GM12878 (cell line): ENCODE measurements at regions of chr19 and their contacts with region 1.

Region 1: DNA sequence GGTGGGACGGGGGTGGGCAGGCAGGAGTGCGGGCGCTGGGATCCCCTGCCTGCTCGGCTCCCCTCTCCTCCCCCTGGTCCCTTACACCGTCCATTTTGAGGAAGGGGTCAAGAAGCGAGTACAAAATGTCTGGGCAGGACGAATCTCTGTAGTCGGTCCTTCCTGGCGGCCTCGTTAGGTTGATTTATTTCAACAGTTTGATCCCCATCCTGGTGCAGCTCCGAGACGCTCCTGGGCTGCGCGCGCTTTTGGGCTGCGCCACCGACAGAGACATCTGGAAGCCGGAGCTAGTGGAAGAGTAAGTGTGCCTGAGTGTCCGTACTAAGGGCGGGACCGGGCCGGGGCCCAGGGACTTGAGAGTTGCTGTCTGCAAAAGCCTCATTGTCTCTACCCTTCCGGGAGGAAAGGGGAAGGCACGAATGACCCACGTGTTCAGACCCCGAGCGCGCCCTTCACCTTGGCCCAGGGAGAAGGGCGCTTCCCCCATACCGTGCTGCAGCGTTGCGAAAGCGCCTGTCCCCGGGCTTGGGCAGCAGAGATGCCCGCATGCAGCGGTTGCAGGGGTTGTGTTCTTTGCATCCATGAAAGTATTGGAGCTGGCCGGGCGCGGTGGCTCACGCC is 1.8 kb downstream of the ZNF114 start:
- DNase-seq: no peak
- ATAC-seq: peak; percentile 69
- H3K4me3 ChIP-seq: peak overlapping the region; percentile 90
- H3K27ac ChIP-seq: peak overlapping the region; percentile 83
- H3K4me1 ChIP-seq: no peaks in the 10 kb centered on the region
- H3K27me3 ChIP-seq: no peaks in the 10 kb centered on the region; a peak in 1 of 4 replicates
- CTCF ChIP-seq: no peak
- EP300 ChIP-seq: no peak
- POLR2A ChIP-seq: peak; percentile 77
- RAD21 ChIP-seq: no peak

Region 2: DNA sequence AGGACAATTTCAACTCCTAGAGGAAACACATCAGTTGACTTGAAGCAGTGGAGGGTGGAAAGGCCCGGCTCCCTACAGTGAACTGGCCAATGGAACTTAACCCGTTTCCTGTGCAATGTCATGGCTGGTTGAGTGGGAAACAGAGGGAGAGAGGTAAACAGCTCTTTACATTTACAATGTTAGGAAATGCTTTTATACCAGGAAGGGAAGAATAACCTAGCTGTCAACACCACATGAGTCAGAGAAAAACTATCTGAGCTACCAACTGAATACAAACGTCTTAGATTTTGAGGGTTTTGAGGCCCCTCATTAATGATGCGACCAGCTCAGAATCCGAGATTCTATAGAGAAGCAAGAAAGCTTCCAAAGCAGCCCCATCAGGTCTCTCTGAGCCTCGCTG is 52.6 kb before region 1 on chr19:
- CTCF ChIA-PET with region 1: no interaction called
- POLR2A ChIA-PET with region 1: no interaction called
- RAD21 ChIA-PET with region 1: no interaction called
- SMC1A ChIA-PET with region 1: no interaction called
- in situ Hi-C with region 1: no loop called
- intact Hi-C with region 1: no loop called
- DNase-seq: no peak
- ATAC-seq: no peak
- H3K4me3 ChIP-seq: no peak overlapping the region
- H3K27ac ChIP-seq: no peak overlapping the region
- H3K4me1 ChIP-seq: no peaks in the 10 kb centered on the region
- H3K27me3 ChIP-seq: no peaks in the 10 kb centered on the region
- CTCF ChIP-seq: no peak
- EP300 ChIP-seq: no peak
- POLR2A ChIP-seq: no peak
- RAD21 ChIP-seq: no peak

Region 3: DNA sequence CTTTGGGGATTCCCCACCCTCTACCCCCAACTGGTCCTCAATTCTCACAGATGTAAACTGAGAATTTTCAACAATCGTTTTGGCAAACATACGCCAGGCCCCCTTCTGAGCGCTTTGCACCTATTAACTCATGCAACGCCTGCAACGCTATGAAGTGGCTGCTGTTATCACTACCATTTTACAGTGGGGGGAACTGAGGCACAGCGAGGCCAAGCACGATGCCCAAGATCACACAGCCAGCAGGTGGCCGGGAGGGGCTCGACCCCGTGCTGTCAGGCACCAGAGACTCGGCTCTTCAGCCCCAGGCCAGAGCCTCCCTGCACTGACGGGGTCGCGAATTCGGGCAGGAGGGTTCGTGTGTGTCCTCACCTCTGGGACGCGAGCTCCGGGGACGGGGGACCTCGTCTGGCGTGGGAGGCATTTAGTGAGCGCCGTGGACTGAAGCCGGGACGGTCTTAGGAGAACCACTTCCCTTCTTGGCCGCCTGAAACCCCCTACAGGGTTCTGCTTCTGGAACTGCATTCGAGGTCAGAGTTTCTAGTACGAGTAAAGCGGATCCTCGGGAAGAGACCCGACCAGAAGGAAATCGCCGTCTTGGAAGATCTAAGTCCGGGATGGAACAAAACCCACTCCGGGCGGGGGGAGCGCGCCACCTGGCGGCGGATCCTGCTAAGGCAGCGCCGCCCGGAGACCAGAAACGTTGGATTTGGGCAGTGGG is 19.3 kb after region 1 on chr19:
- CTCF ChIA-PET with region 1: interaction called, 23 read pairs
- POLR2A ChIA-PET with region 1: no interaction called
- RAD21 ChIA-PET with region 1: interaction called, 3 read pairs
- SMC1A ChIA-PET with region 1: interaction called, 4 read pairs
- in situ Hi-C with region 1: no loop called
- intact Hi-C with region 1: loop called (anchors 1 kb)
- DNase-seq: no peak
- ATAC-seq: peak; percentile 81
- H3K4me3 ChIP-seq: peak overlapping the region; percentile 41; the same call in 1 of the 2 replicates
- H3K27ac ChIP-seq: no peak overlapping the region
- H3K4me1 ChIP-seq: peaks cover 3% of the 10 kb centered on the region; the same call in 1 of the 2 replicates
- H3K27me3 ChIP-seq: no peaks in the 10 kb centered on the region
- CTCF ChIP-seq: peak; percentile 84 to 97 (median 96)
- EP300 ChIP-seq: no peak
- POLR2A ChIP-seq: no peak
- RAD21 ChIP-seq: peak; percentile 75

Region 4: GRCh38 chr19:48381178-48381950 is 109.7 kb after region 1 on chr19:
- CTCF ChIA-PET with region 1: no interaction called
- POLR2A ChIA-PET with region 1: no interaction called
- RAD21 ChIA-PET with region 1: no interaction called
- SMC1A ChIA-PET with region 1: no interaction called
- in situ Hi-C with region 1: no loop called
- intact Hi-C with region 1: no loop called
- DNase-seq: no peak
- ATAC-seq: no peak
- H3K4me3 ChIP-seq: no peak overlapping the region
- H3K27ac ChIP-seq: no peak overlapping the region
- H3K4me1 ChIP-seq: no peaks in the 10 kb centered on the region
- H3K27me3 ChIP-seq: no peaks in the 10 kb centered on the region
- CTCF ChIP-seq: no peak
- EP300 ChIP-seq: no peak
- POLR2A ChIP-seq: no peak
- RAD21 ChIP-seq: no peak